Psoas muscle (tissue), 8 donors: ENCODE measurements at regions of chr10 and their contacts with region 1.

Region 1: GRCh38 chr10:70880077-70880534 is 8.3 kb downstream of the PCBD1 start:
- DNase-seq: peak; percentile 64 to 80
- ATAC-seq: peak; percentile 78 to 97 (median 90)
- H3K4me3 ChIP-seq: no peak overlapping the region
- H3K27ac ChIP-seq: no peak overlapping the region
- H3K4me1 ChIP-seq: no peaks in the 10 kb centered on the region
- H3K27me3 ChIP-seq: no peaks in the 10 kb centered on the region
- CTCF ChIP-seq: peak; percentile 97

Region 2: GRCh38 chr10:70549962-70550458 is 330.1 kb before region 1 on chr10:
- intact Hi-C with region 1: loop called (anchors 2 to 10 kb)
- DNase-seq: peak; percentile 55 to 72
- ATAC-seq: peak; percentile 80 to 93 (median 82)
- H3K4me3 ChIP-seq: no peak overlapping the region
- H3K27ac ChIP-seq: no peak overlapping the region
- H3K4me1 ChIP-seq: no peaks in the 10 kb centered on the region
- H3K27me3 ChIP-seq: no peaks in the 10 kb centered on the region
- CTCF ChIP-seq: peak; percentile 94

Region 3: GRCh38 chr10:70672165-70673042 is 207.7 kb before region 1 on chr10 and contains the start of gene ADAMTS14:
- intact Hi-C with region 1: no loop called
- DNase-seq: peak; percentile 56 to 61
- ATAC-seq: peak; percentile 69 to 82 (median 78)
- H3K4me3 ChIP-seq: peak within 1 kb of the TSS; percentile 47
- H3K27ac ChIP-seq: no peak within 1 kb of the TSS
- H3K4me1 ChIP-seq: peaks cover 7% of the 10 kb centered on the region
- H3K27me3 ChIP-seq: peaks cover 0 to 24% (median 0%) of the 10 kb centered on the region in 3 donors
- CTCF ChIP-seq: no peak
- total RNA-seq, gene ADAMTS14: 0.05 to 0.06 TPM in 2 of 4 donors, not detected in the others

Region 4: GRCh38 chr10:70815504-70816219 is 64.4 kb before region 1 on chr10 and contains the start of gene SGPL1:
- intact Hi-C with region 1: loop called (anchors 1 kb)
- DNase-seq: peak; percentile 90 to 92
- ATAC-seq: peak; percentile 98 to 99 (median 98)
- H3K4me3 ChIP-seq: peak within 1 kb of the TSS; percentile 86
- H3K27ac ChIP-seq: peak within 1 kb of the TSS; percentile 88
- H3K4me1 ChIP-seq: peaks cover 8% of the 10 kb centered on the region
- H3K27me3 ChIP-seq: no peaks in the 10 kb centered on the region
- CTCF ChIP-seq: peak; percentile 98
- total RNA-seq, gene SGPL1: 9.5 to 15.1 (median 11.5) TPM

Region 5: DNA sequence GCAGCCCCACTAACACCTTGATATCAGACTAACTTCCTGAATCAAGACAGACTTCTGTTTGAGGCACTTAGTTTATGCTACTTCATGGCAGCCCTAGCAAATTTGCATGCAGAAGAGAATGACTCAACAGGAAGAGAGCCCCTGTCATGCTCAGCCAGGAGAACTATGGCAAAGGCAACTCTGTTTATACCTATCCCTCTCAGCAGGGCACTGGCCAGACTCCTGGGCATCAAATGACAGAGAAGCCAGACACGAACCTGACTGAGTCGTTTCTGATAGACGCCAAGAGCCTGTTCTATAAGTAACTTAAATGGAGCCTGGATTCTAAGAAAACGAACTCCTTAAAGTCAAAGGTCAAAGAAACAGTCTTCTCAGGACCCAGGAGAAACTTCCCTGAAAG is 281.3 kb after region 1 on chr10:
- intact Hi-C with region 1: no loop called
- DNase-seq: no peak
- ATAC-seq: peak; percentile 61 to 84 (median 78)
- H3K4me3 ChIP-seq: no peak overlapping the region
- H3K27ac ChIP-seq: peak overlapping the region; percentile 3
- H3K4me1 ChIP-seq: peaks cover 9% of the 10 kb centered on the region
- H3K27me3 ChIP-seq: no peaks in the 10 kb centered on the region
- CTCF ChIP-seq: no peak

Region 6: GRCh38 chr10:71212318-71213126 is 332.4 kb after region 1 on chr10 and contains the start of gene UNC5B:
- intact Hi-C with region 1: no loop called
- DNase-seq: peak; percentile 90 to 95
- ATAC-seq: peak; percentile 91 to 93 (median 92)
- H3K4me3 ChIP-seq: peak within 1 kb of the TSS; percentile 84
- H3K27ac ChIP-seq: peak within 1 kb of the TSS; percentile 77
- H3K4me1 ChIP-seq: peaks cover 13% of the 10 kb centered on the region
- H3K27me3 ChIP-seq: peaks cover 0 to 2% (median 0%) of the 10 kb centered on the region in 3 donors
- CTCF ChIP-seq: peak; percentile 51
- total RNA-seq, gene UNC5B: 1.1 to 5.7 (median 2.5) TPM